Activated CD4-positive, alpha-beta T cell treated with anti-CD3 and anti-CD28 coated beads for 36 hours (primary cell): ENCODE measurements at regions of chr1 and their contacts with region 1.

Region 1: DNA sequence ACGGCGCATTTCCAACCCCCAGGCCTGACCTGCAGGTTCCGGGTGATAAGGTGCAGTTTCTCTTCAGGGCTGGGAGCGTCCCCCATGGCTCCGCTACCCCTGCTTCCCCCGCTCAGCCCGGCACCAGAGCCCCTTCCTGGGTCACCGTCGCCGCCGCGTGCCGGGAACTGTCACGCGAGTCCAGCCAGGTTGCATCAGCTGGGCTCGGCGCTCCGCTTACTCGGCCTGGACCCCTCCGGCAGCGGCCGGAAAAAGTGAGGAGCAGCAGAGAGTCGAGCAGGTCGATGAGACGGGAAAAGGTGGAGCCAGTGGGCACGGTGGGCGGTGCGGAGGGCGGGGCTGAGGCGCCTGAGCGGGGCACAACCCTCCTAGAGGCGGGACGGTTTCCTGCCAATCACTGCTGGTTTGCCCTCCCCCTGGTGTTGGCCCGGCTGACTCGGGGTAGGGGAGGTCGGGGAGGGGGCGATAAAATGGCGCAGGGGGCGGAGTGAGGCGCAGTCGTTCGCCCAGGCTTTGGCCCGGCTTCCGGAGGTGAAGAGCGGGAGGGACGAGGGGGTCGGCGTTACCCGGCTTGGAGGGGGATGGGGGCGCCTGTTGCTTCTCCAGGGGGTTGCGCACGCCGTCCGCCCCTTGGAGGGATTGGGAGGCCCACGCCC is at the starts of genes S100PBP and YARS1:
- DNase-seq: peak; percentile 100
- ATAC-seq: peak; percentile 96
- H3K4me3 Mint-ChIP-seq: peak within 1 kb of the TSS; percentile 97
- H3K27ac Mint-ChIP-seq: peak within 1 kb of the TSS; percentile 99
- H3K4me1 Mint-ChIP-seq: peaks cover 48% of the 10 kb centered on the region
- H3K27me3 Mint-ChIP-seq: no peaks in the 10 kb centered on the region
- total RNA-seq, gene S100PBP: 27.9 to 34.3 TPM
- total RNA-seq, gene YARS1: 259 to 309 TPM

Region 2: GRCh38 chr1:32179443-32180185 is 637.7 kb before region 1 on chr1 and contains the start of gene TXLNA:
- CTCF ChIA-PET with region 1: interaction called, 5 read pairs
- POLR2A ChIA-PET with region 1: no interaction called
- intact Hi-C with region 1: loop called in 1 of 2 experiments (anchors 1 kb)
- DNase-seq: peak; percentile 96
- ATAC-seq: peak; percentile 93
- H3K4me3 Mint-ChIP-seq: peak within 1 kb of the TSS; percentile 86
- H3K27ac Mint-ChIP-seq: peak within 1 kb of the TSS; percentile 98
- H3K4me1 Mint-ChIP-seq: peaks cover 44% of the 10 kb centered on the region
- H3K27me3 Mint-ChIP-seq: no peaks in the 10 kb centered on the region
- total RNA-seq, gene TXLNA: 79.5 to 79.7 TPM

Region 3: DNA sequence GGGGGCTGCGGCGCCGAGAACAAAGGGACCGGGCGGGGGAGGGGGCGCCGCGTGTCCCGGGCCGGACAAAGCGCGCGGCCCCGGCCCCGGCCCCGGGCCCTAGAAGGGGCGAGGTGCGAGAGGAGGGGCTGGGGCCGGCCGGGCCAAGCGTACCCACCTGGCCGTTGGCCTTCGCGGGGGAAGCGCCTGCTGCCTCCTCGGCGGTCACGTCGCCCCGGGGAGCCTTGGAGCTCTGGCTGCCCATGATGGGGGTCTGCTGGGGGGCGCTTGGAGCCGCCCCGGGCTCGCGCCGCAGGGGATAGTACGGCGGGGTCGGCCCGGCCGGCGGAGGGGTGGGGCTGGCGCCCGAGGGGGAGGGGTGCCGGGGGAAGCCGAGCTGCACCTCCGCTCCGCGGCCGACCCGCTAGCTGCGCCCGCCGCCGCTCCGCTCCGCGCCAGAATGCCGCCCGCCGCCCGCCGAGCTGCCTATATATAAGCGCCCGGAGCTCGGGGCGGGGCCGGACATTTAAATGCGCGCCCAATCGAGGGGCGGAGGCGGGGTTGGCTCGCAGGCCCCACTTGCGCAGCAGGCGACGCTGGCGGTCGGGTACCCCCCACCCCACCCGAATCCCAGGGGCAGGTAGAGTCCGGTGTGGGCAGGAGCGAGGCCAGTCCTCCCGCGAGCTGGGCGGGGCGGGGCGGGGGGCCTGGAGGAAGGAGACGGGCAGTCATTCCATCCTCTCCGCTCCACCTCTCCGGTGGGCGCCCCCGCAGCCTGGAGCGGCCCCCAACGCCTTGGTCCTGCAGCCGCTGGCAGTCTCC is 481.3 kb before region 1 on chr1 and contains the start of gene MARCKSL1:
- CTCF ChIA-PET with region 1: no interaction called
- POLR2A ChIA-PET with region 1: no interaction called
- intact Hi-C with region 1: loop called in 1 of 2 experiments (anchors 1 kb)
- DNase-seq: peak; percentile 88
- ATAC-seq: peak; percentile 50
- H3K4me3 Mint-ChIP-seq: peak within 1 kb of the TSS; percentile 77
- H3K27ac Mint-ChIP-seq: peak within 1 kb of the TSS; percentile 76
- H3K4me1 Mint-ChIP-seq: peaks cover 52% of the 10 kb centered on the region
- H3K27me3 Mint-ChIP-seq: no peaks in the 10 kb centered on the region
- total RNA-seq, gene MARCKSL1: 27.0 to 29.3 TPM

Region 4: DNA sequence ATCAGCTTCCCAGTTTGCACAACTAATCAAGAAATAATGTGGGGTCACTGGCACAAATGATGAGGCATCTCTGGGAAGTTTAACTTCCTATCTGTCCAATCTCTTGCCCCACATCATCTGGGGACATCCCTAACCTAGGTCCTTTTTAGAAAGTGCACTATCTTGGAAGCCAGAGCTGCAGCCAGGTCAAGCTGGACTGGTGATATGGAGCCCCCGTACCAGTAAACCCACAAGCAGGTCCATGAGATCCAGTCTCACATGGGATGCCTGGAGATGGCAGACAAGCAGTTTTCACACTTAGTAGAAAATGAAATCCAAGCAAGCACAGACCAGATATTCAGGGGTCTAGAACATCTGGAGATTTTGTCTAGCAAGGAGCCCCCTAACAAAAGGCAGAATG is 395.5 kb before region 1 on chr1:
- CTCF ChIA-PET with region 1: no interaction called
- POLR2A ChIA-PET with region 1: no interaction called
- intact Hi-C with region 1: no loop called
- DNase-seq: no peak
- ATAC-seq: no peak
- H3K4me3 Mint-ChIP-seq: no peak overlapping the region
- H3K27ac Mint-ChIP-seq: no peak overlapping the region
- H3K4me1 Mint-ChIP-seq: no peaks in the 10 kb centered on the region
- H3K27me3 Mint-ChIP-seq: peaks cover 11% of the 10 kb centered on the region

Region 5: GRCh38 chr1:32753532-32754312 is 63.6 kb before region 1 on chr1:
- CTCF ChIA-PET with region 1: no interaction called
- POLR2A ChIA-PET with region 1: no interaction called
- intact Hi-C with region 1: loop called in 1 of 2 experiments (anchors 1 kb)
- DNase-seq: peak; percentile 80
- ATAC-seq: peak; percentile 87
- H3K4me3 Mint-ChIP-seq: peak overlapping the region; percentile 53
- H3K27ac Mint-ChIP-seq: no peak overlapping the region
- H3K4me1 Mint-ChIP-seq: peaks cover 10% of the 10 kb centered on the region
- H3K27me3 Mint-ChIP-seq: peaks cover 8% of the 10 kb centered on the region

Region 6: GRCh38 chr1:33036526-33037503 is 219.5 kb after region 1 on chr1 and contains the start of gene AK2:
- CTCF ChIA-PET with region 1: no interaction called
- POLR2A ChIA-PET with region 1: no interaction called
- intact Hi-C with region 1: loop called in 1 of 2 experiments (anchors 1 kb)
- DNase-seq: peak; percentile 96
- ATAC-seq: peak; percentile 100
- H3K4me3 Mint-ChIP-seq: peak within 1 kb of the TSS; percentile 96
- H3K27ac Mint-ChIP-seq: peak within 1 kb of the TSS; percentile 87
- H3K4me1 Mint-ChIP-seq: peaks cover 41% of the 10 kb centered on the region
- H3K27me3 Mint-ChIP-seq: no peaks in the 10 kb centered on the region
- total RNA-seq, gene AK2: 386 to 464 TPM

Region 7: GRCh38 chr1:33181921-33182341 is 364.6 kb after region 1 on chr1 and contains the start of gene TRIM62:
- CTCF ChIA-PET with region 1: no interaction called
- POLR2A ChIA-PET with region 1: no interaction called
- intact Hi-C with region 1: loop called in 1 of 2 experiments (anchors 1 kb)
- DNase-seq: peak; percentile 84
- ATAC-seq: peak; percentile 35
- H3K4me3 Mint-ChIP-seq: peak within 1 kb of the TSS; percentile 79
- H3K27ac Mint-ChIP-seq: peak within 1 kb of the TSS; percentile 74
- H3K4me1 Mint-ChIP-seq: peaks cover 25% of the 10 kb centered on the region
- H3K27me3 Mint-ChIP-seq: peaks cover 5% of the 10 kb centered on the region
- total RNA-seq, gene TRIM62: 3.6 to 3.7 TPM

Region 8: GRCh38 chr1:33472349-33472980 is 655.2 kb after region 1 on chr1 and contains the start of gene ZSCAN20:
- CTCF ChIA-PET with region 1: no interaction called
- POLR2A ChIA-PET with region 1: no interaction called
- intact Hi-C with region 1: loop called in 1 of 2 experiments (anchors 1 kb)
- DNase-seq: peak; percentile 94
- ATAC-seq: peak; percentile 97
- H3K4me3 Mint-ChIP-seq: peak within 1 kb of the TSS; percentile 81
- H3K27ac Mint-ChIP-seq: peak within 1 kb of the TSS; percentile 71
- H3K4me1 Mint-ChIP-seq: peaks cover 23% of the 10 kb centered on the region
- H3K27me3 Mint-ChIP-seq: no peaks in the 10 kb centered on the region
- total RNA-seq, gene ZSCAN20: 3.4 to 5.4 TPM